ENCODE measurements at regions of chr9 and their contacts with region 1.

Region 1: GRCh38 chr9:132694157-132694556 is 23.9 kb downstream of the GTF3C4 start:
- DNase-seq: peak in 1 of 2 experiments; percentile 48
- H3K4me3 ChIP-seq: no peak overlapping the region
- H3K27ac ChIP-seq: no peak overlapping the region
- H3K4me1 ChIP-seq: no peaks in the 10 kb centered on the region
- H3K27me3 ChIP-seq: no peaks in the 10 kb centered on the region
- CTCF ChIP-seq: peak in 2 of 3 experiments; percentile 68 to 72; a peak in 3 of 4 replicates
- EP300 ChIP-seq: no peak
- POLR2A ChIP-seq: no peak
- RAD21 ChIP-seq: peak; percentile 58 to 76

Region 2: GRCh38 chr9:132679946-132680625 is 14.1 kb before region 1 on chr9:
- CTCF ChIA-PET with region 1: interaction called, 13 read pairs
- POLR2A ChIA-PET with region 1: interaction called, 3 read pairs
- DNase-seq: no peak
- H3K4me3 ChIP-seq: no peak overlapping the region
- H3K27ac ChIP-seq: no peak overlapping the region
- H3K4me1 ChIP-seq: no peaks in the 10 kb centered on the region
- H3K27me3 ChIP-seq: no peaks in the 10 kb centered on the region
- CTCF ChIP-seq: no peak
- EP300 ChIP-seq: no peak
- POLR2A ChIP-seq: no peak
- RAD21 ChIP-seq: no peak

Region 3: DNA sequence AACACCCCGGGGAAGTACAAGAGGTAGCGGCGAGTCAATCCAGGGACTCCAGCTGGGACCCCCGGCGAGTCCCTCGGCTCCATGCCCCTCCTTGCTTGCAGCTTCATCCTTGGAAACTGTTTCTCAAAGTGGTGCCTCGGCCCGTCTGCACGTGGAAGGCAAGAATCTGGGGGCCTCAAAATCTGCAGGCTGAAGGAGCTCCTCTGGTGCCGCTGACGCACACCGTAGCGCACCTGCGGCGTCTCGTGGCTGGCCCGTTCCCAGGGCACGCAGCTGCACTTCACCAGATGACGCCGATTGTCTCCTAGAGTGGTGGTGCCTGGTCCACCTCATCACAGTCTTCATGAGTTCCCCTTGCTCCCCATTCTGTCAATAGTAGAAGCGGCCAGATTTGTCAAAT is 14.6 kb after region 1 on chr9:
- CTCF ChIA-PET with region 1: interaction called, 13 read pairs
- POLR2A ChIA-PET with region 1: interaction called, 4 read pairs
- DNase-seq: no peak
- H3K4me3 ChIP-seq: no peak overlapping the region
- H3K27ac ChIP-seq: no peak overlapping the region
- H3K4me1 ChIP-seq: no peaks in the 10 kb centered on the region
- H3K27me3 ChIP-seq: no peaks in the 10 kb centered on the region
- CTCF ChIP-seq: no peak
- EP300 ChIP-seq: no peak
- POLR2A ChIP-seq: no peak
- RAD21 ChIP-seq: no peak

Region 4: DNA sequence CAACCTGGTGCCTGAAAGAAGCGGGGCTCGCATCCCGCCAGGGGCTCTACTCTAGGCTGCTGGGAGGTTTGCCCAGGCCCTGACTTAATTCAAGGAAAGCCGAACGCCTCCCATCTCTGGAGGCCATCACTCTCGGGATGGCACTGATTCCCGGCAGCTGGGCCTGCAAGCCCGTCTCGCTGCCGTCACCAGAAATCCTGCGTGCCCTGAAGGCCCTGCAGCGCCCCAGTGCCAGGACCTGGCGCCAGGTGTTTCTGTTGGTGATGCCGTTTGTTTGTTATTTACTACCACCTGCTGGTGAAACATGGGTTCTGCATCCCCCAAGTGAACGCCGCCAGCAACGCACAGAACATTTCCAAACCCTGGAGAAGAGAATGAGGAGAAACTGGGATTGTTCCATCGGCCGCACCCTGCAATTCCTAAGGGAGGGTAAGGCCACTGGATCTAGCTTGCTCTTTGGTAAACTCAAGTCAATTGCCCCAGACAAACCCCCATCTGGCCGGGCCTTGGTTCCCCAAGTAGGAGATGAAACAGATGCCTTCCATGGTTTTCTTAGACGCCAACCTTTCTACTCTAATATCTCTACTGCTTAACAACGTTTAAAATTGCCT is 106.0 kb after region 1 on chr9:
- CTCF ChIA-PET with region 1: interaction called, 29 read pairs
- POLR2A ChIA-PET with region 1: interaction called, 5 read pairs
- DNase-seq: peak; percentile 80 to 87
- H3K4me3 ChIP-seq: no peak overlapping the region
- H3K27ac ChIP-seq: no peak overlapping the region
- H3K4me1 ChIP-seq: peaks cover 0 to 4% (median 0%) of the 10 kb centered on the region in 4 experiments; a peak in 1 of 7 replicates
- H3K27me3 ChIP-seq: peaks cover 0 to 36% (median 26%) of the 10 kb centered on the region in 4 experiments; a peak in 6 of 7 replicates
- CTCF ChIP-seq: peak; percentile 75 to 98 (median 93)
- EP300 ChIP-seq: 0 out of 3 replicates have a peak, but pooled peaks of 1 of the 2 experiments have one; percentile 42
- POLR2A ChIP-seq: no peak
- RAD21 ChIP-seq: peak; percentile 97 to 98